Ascending aorta (tissue), 2 donors: ENCODE measurements at regions of chr7 and their contacts with region 1.

Region 1: DNA sequence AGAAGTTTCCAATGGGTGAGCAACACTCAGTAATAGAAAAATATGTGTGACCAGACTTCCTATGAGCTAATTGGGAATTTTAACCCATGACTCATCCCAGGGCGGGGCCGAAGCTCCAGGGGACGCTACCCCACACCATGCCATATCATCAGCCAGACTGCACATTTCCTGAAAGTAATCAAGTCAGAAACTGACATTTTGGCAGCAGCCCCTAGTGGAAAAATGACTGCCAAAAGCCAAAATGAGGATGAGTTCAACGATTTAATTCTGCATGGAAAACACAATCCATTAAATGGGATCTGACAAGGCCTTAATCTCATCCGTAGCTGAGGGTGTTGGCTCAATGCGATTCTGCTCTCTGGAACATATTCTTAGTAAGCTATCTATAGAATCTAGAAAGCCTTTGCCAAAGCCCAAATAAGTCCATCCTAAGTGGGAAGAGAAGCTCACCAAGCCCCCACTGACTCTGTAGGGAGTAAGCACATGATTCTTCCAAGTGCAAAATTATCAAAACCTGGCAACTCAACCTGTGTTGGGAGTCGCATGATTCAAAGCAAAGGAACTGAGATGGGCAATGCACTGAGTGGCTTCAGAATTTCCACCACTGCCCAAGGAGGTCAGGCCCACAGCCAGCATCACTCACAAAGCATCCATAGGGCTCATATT is 93.1 kb upstream of the PDE1C start:
- DNase-seq: peak in 1 of 2 donors; percentile 80
- H3K4me3 ChIP-seq: no peak overlapping the region
- H3K27ac ChIP-seq: peak overlapping the region; percentile 52 to 78
- H3K4me1 ChIP-seq: peaks cover 0 to 12% of the 10 kb centered on the region in 2 donors
- H3K27me3 ChIP-seq: no peaks in the 10 kb centered on the region
- CTCF ChIP-seq: no peak

Region 2: GRCh38 chr7:31857172-31857571 is 306.1 kb before region 1 on chr7:
- intact Hi-C with region 1: no loop called
- DNase-seq: no peak
- H3K4me3 ChIP-seq: no peak overlapping the region
- H3K27ac ChIP-seq: no peak overlapping the region
- H3K4me1 ChIP-seq: no peaks in the 10 kb centered on the region
- H3K27me3 ChIP-seq: no peaks in the 10 kb centered on the region
- CTCF ChIP-seq: no peak

Region 3: GRCh38 chr7:32093415-32094408 is 69.6 kb before region 1 on chr7:
- intact Hi-C with region 1: loop called (anchors 2 kb)
- DNase-seq: peak in 1 of 2 donors; percentile 77
- H3K4me3 ChIP-seq: no peak overlapping the region
- H3K27ac ChIP-seq: peak overlapping the region in 1 of 2 donors; percentile 30
- H3K4me1 ChIP-seq: peaks cover 3 to 13% of the 10 kb centered on the region in 2 donors
- H3K27me3 ChIP-seq: no peaks in the 10 kb centered on the region
- CTCF ChIP-seq: no peak

Region 4: DNA sequence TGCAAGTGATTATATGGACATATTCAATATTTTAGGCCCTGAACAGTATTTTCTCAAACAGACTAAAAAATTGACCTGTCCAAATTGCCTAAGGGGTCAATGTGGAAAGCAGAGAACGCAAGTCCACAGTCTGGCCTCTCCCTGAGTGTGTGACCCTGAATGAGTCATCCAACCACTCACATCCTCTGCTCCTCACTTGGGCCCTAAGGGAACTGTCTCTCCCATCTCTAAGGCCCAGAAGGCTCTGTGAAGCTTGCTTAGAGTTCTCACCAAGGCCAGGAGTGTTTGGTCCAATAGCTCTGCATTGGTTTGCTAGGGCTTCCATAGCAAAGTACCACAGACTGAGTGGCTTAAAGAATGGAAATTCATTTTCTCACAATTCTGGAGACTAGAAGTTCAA is 171.8 kb after region 1 on chr7:
- intact Hi-C with region 1: no loop called
- DNase-seq: no peak
- H3K4me3 ChIP-seq: no peak overlapping the region
- H3K27ac ChIP-seq: no peak overlapping the region
- H3K4me1 ChIP-seq: no peaks in the 10 kb centered on the region
- H3K27me3 ChIP-seq: no peaks in the 10 kb centered on the region
- CTCF ChIP-seq: no peak

Region 5: GRCh38 chr7:32519763-32520162 is 356.5 kb after region 1 on chr7:
- intact Hi-C with region 1: no loop called
- DNase-seq: no peak
- H3K4me3 ChIP-seq: no peak overlapping the region
- H3K27ac ChIP-seq: no peak overlapping the region
- H3K4me1 ChIP-seq: no peaks in the 10 kb centered on the region
- H3K27me3 ChIP-seq: no peaks in the 10 kb centered on the region
- CTCF ChIP-seq: no peak

Region 6: DNA sequence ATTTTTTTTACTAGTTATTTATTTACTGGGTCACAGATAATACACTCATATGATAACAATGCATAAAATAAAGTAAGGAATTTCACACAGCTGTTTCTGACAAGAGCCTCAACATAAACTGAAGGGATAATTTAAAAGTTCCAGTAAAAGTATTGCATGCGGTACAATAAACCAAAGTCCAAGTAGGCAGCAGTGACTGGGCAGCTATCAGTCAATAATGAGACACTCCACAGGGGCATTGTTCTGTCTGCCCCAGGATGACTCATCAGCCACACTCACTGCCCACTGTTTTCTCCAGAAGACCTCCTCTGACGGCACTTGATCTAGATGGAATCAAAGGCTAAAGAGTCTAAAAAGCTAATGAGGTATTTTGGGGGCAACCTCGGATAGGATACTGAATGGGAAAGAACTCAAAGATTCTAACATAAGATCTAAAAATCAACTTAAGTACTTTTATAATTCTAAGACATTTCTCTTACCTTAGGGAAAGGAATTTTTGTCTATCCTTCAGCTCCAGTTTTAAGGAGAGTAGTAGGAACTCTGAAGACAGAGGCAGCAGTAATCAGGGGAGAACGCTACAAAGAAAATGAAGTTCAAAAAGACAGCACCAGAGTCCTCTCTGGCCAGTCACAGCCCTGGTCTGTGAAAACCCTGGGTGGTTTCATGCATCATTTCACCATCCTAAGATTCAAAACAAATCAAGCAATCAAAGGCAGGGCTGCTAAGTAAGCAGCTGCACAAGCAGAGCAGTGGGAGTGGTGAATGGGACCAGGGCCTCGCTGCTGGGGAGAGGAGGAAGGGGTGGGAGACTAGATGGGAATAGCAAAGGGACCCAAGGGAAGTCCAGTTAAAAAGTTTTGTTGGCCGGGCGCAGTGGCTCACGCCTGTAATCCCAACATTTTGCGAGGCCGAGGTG is 507.1 kb after region 1 on chr7:
- intact Hi-C with region 1: no loop called
- DNase-seq: no peak
- H3K4me3 ChIP-seq: no peak overlapping the region
- H3K27ac ChIP-seq: no peak overlapping the region
- H3K4me1 ChIP-seq: no peaks in the 10 kb centered on the region
- H3K27me3 ChIP-seq: no peaks in the 10 kb centered on the region
- CTCF ChIP-seq: no peak